ENCODE measurements at regions of chr17 and their contacts with region 1.

Region 1: DNA sequence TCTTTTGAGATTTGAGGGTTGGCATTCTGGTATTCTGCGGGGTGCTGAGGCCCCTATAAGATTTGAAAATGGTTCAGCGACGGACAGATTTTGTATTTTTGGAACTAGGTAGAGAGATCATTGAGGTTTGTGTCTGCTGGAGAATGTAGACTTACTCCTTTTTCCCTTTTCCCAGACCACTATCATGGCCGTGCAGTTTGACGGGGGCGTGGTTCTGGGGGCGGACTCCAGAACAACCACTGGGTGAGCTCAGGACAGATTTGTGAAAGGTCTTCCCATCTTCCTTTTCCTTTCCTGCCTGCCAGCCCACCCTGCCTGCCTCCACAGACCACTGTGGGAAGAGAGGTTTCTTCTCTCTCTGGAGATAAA is 573 bp downstream of the PSMB6 start:
- DNase-seq: peak; percentile 49
- H3K4me3 Mint-ChIP-seq: peak overlapping the region; percentile 87
- H3K27ac Mint-ChIP-seq: peak overlapping the region; percentile 75
- H3K4me1 Mint-ChIP-seq: no peaks in the 10 kb centered on the region
- H3K27me3 Mint-ChIP-seq: no peaks in the 10 kb centered on the region
- CTCF ChIP-seq: no peak

Region 2: GRCh38 chr17:4709794-4710692 is 86.5 kb before region 1 on chr17 and contains the start of gene ARRB2:
- CTCF ChIA-PET with region 1: interaction called, 3 read pairs
- intact Hi-C with region 1: loop called (anchors 5 kb)
- DNase-seq: peak; percentile 92
- H3K4me3 Mint-ChIP-seq: peak within 1 kb of the TSS; percentile 74
- H3K27ac Mint-ChIP-seq: peak within 1 kb of the TSS; percentile 62
- H3K4me1 Mint-ChIP-seq: peaks cover 11% of the 10 kb centered on the region
- H3K27me3 Mint-ChIP-seq: no peaks in the 10 kb centered on the region
- CTCF ChIP-seq: peak; percentile 46
- total RNA-seq, gene ARRB2: 21.1 and 27.6 TPM in 2 replicates

Region 3: DNA sequence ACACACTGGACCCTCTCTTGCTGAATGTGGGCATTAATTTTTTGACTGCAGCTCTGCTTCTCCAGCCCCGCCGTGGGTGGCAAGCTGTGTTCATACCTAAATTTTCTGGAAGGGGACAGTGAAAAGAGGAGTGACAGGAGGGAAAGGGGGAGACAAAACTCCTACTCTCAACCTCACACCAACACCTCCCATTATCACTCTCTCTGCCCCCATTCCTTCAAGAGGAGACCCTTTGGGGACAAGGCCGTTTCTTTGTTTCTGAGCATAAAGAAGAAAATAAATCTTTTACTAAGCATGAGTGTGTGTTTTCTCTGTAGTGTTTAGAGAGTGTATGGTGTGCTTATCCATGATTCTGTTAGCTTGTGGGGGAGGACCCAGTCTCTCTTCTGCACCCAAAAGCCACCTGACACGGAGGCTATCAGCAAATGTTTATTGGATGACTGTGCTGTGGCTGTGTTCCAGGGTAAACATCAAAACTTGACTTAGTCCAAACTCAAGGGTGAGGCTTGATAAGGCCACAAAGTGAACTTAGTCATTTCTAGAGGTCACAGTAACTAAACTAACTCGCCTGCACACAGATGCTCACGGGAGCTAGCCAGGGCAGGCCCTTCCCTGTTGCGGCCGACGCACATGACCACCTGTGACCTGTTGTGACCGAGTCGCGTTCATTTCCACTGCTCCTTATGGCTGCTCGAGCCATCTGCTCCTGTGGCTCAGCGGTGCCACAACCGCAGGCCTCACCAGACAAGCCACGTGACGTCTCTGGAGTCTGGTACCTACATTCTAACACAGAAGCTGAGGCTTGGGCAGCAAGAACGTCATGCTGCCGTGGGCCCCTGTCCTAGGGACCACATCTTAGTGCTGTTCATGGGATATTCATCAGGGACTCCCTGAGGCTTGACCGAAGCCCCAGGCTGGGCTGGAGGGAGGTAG is 75.1 kb before region 1 on chr17:
- CTCF ChIA-PET with region 1: no interaction called
- intact Hi-C with region 1: no loop called
- DNase-seq: peak; percentile 63
- H3K4me3 Mint-ChIP-seq: no peak overlapping the region
- H3K27ac Mint-ChIP-seq: peak overlapping the region; percentile 50
- H3K4me1 Mint-ChIP-seq: peaks cover 40% of the 10 kb centered on the region
- H3K27me3 Mint-ChIP-seq: peaks cover 27% of the 10 kb centered on the region
- CTCF ChIP-seq: no peak